A549 (cell line): ENCODE measurements at regions of chr17 and their contacts with region 1.

Region 1: GRCh38 chr17:42798383-42799380 is at the starts of genes CNTD1 and COA3:
- DNase-seq: peak; percentile 92 to 96
- ATAC-seq: peak; percentile 97 to 99
- H3K4me3 ChIP-seq: peak within 1 kb of the TSS; percentile 72
- H3K27ac ChIP-seq: peak within 1 kb of the TSS; percentile 83 to 92
- H3K4me1 ChIP-seq: peaks cover 38% of the 10 kb centered on the region
- CTCF ChIP-seq: no peak
- EP300 ChIP-seq: no peak
- POLR2A ChIP-seq: peak; percentile 81
- RAD21 ChIP-seq: no peak
- polyA plus RNA-seq, gene CNTD1: 0.06 and 0.07 TPM in 2 replicates
- polyA plus RNA-seq, gene COA3: 126 and 170 TPM in 2 replicates

Region 2: DNA sequence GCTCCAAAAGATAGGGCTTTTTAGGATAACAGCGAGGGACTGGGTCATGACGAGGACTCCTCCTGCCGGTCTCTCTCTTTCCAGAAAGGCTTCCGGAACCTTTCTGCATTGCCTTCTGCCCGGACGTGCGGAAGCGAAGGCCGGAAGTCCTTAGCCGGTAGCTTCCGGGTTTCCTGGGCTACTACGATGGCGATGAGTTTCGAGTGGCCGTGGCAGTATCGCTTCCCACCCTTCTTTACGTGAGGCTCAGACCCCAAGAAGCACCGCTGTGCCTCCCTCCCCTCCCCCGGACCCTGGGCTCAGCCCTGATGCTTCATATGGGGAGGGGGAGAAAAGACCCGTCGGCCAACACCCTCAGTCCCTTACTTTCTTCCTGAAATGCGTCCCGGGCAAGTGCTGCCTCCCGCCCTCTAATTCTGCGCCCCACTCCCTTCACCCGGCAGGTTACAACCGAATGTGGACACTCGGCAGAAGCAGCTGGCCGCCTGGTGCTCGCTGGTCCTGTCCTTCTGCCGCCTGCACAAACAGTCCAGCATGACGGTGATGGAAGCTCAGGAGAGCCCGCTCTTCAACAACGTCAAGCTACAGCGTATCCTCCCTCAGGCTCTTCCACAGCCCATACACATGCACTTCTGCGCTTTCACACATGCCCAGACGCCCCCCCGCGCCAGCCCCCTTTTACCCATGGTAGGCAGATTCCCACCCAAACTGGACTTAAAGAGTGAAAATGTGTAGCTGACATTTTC is 25.2 kb before region 1 on chr17 and contains the start of gene VPS25:
- CTCF ChIA-PET with region 1: interaction called, 5 read pairs
- POLR2A ChIA-PET with region 1: interaction called, 10 read pairs
- DNase-seq: peak; percentile 92 to 98
- ATAC-seq: peak; percentile 98
- H3K4me3 ChIP-seq: peak within 1 kb of the TSS; percentile 65
- H3K27ac ChIP-seq: peak within 1 kb of the TSS; percentile 80 to 97
- H3K4me1 ChIP-seq: peaks cover 21% of the 10 kb centered on the region
- CTCF ChIP-seq: no peak; the same call in 2 of the 3 replicates
- EP300 ChIP-seq: no peak
- POLR2A ChIP-seq: peak; percentile 96
- RAD21 ChIP-seq: peak; percentile 17 to 29; a peak in 3 of 5 replicates
- polyA plus RNA-seq, gene VPS25: 143 and 173 TPM in 2 replicates